ENCODE measurements at regions of chr6 and their contacts with region 1.

Region 1: DNA sequence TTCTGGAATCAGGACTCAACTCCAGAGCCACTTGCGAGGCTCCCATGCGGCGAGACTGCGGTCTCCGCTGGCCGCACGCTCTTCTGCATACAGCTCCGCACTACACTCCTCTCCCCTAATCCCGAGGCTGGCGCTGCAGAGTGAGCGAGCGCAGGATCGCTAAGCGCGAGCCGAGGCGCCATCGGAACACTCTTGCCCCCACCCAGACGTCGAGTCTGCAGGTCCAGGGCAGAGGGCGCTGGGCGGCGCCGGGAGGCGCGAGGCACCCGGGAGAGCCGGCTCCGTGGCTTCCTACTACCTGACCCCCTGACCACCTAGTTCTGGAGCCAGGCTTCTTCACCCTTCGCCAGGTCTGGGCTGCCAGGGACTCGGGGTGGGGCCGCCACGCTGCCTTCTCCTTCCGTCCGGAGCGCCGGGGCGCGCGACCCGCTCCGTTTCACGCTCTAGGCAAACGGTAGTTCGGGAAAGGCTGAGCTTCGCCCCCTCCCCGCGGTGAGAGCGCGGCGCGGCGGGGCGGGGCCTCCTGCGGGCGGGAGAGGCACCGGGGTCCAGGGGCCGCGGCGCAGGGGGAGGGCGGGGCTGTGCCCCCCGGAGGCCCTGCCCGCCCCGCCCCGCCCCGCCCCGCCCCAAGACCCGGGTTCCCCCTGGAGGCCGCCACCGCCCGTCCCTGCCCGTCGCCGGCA is 5.4 kb upstream of the TUBB2A start:
- DNase-seq: peak; percentile 12 to 84 (median 63)
- ATAC-seq: peak; percentile 47
- H3K4me3 ChIP-seq: peak overlapping the region; percentile 71 to 79
- H3K4me3 Mint-ChIP-seq: peak overlapping the region; percentile 84
- H3K27ac ChIP-seq: peak overlapping the region in 1 of 2 experiments; percentile 72
- H3K27ac Mint-ChIP-seq: peak overlapping the region; percentile 86
- H3K4me1 ChIP-seq: peaks cover 33% of the 10 kb centered on the region
- H3K4me1 Mint-ChIP-seq: peaks cover 37% of the 10 kb centered on the region
- H3K27me3 ChIP-seq: no peaks in the 10 kb centered on the region
- H3K27me3 Mint-ChIP-seq: no peaks in the 10 kb centered on the region
- CTCF ChIP-seq: no peak

Region 2: GRCh38 chr6:3125815-3126214 is 36.9 kb before region 1 on chr6:
- CTCF ChIA-PET with region 1: interaction called, 3 read pairs
- POLR2A ChIA-PET with region 1: interaction called, 3 read pairs
- intact Hi-C with region 1: loop called (anchors 2 kb)
- DNase-seq: no peak
- ATAC-seq: no peak
- H3K4me3 ChIP-seq: no peak overlapping the region
- H3K4me3 Mint-ChIP-seq: no peak overlapping the region
- H3K27ac ChIP-seq: no peak overlapping the region
- H3K27ac Mint-ChIP-seq: no peak overlapping the region
- H3K4me1 ChIP-seq: no peaks in the 10 kb centered on the region
- H3K4me1 Mint-ChIP-seq: peaks cover 4% of the 10 kb centered on the region
- H3K27me3 ChIP-seq: no peaks in the 10 kb centered on the region
- H3K27me3 Mint-ChIP-seq: no peaks in the 10 kb centered on the region
- CTCF ChIP-seq: no peak

Region 3: GRCh38 chr6:3226848-3227362 is 64.2 kb after region 1 on chr6:
- CTCF ChIA-PET with region 1: no interaction called
- POLR2A ChIA-PET with region 1: interaction called, 3 read pairs
- intact Hi-C with region 1: loop called (anchors 2 to 10 kb)
- DNase-seq: peak in 4 of 9 experiments; percentile 32 to 58 (median 42)
- ATAC-seq: peak; percentile 23
- H3K4me3 ChIP-seq: peak overlapping the region; percentile 12 to 20
- H3K4me3 Mint-ChIP-seq: peak overlapping the region; percentile 73
- H3K27ac ChIP-seq: no peak overlapping the region
- H3K27ac Mint-ChIP-seq: no peak overlapping the region
- H3K4me1 ChIP-seq: peaks cover 52% of the 10 kb centered on the region
- H3K4me1 Mint-ChIP-seq: peaks cover 43% of the 10 kb centered on the region
- H3K27me3 ChIP-seq: peaks cover 53 to 56% of the 10 kb centered on the region in 2 experiments
- H3K27me3 Mint-ChIP-seq: peaks cover 52% of the 10 kb centered on the region
- CTCF ChIP-seq: no peak

Region 4: DNA sequence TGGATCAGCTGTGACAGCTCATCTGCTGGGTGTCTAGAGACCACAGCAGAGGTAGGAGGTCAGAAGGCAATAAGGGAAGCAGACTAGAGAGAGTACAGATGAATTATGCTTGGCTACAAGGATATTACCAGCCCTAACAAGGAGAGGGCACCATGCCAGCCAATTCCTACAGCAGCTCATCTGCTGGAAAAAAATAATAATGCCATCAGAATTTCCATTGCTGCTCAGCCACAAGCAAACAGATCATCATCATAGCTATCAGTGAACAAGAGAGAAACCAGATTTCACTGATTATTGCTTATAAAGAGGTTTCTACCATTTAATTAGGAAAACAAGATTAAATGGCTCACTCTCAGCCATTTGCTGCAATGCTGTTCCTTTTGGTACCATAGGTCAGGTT is 162.5 kb after region 1 on chr6:
- CTCF ChIA-PET with region 1: no interaction called
- POLR2A ChIA-PET with region 1: no interaction called
- intact Hi-C with region 1: no loop called
- DNase-seq: no peak
- ATAC-seq: no peak
- H3K4me3 ChIP-seq: no peak overlapping the region
- H3K4me3 Mint-ChIP-seq: no peak overlapping the region
- H3K27ac ChIP-seq: no peak overlapping the region
- H3K27ac Mint-ChIP-seq: no peak overlapping the region
- H3K4me1 ChIP-seq: no peaks in the 10 kb centered on the region
- H3K4me1 Mint-ChIP-seq: no peaks in the 10 kb centered on the region
- H3K27me3 ChIP-seq: peaks cover 0 to 4% of the 10 kb centered on the region in 2 experiments
- H3K27me3 Mint-ChIP-seq: no peaks in the 10 kb centered on the region
- CTCF ChIP-seq: no peak

Region 5: DNA sequence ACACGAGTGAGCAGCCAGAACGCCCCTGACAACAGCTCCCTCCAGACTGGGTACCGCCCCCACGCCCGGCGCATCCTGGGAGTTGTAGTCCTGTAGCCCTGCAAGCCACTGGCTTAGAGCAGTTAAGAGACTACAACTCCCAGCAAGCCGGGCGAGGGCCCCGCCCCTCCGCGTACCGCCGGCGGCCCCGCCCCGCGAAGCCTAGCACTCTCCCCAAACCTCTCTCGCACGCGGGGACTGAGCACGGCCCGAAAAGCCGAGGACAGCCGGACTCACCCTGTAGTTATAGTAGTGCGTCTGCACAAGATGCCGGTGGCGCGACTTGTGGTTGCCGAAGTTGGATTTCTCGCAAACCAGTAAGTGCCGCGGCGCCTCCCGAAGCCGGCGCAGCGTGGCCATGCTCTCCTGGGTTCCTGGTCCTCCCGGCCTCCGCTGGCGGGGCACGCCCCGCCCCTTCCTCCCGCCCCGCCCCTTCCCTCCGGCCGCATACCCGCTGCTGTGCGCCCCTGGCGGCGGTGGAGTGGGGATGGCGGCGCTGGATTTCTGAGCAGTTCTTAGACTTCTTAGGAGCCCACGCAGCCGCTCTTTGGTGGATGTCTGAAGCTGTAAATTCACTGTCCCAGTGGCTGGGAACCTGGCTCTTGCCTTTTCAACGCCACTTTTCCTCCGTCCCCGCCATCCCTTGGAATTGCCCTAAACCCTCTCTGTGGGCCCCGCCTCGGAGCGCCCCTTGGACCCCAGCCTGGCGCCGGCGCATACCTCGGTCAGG is 1841.1 kb after region 1 on chr6 and contains the start of gene RPP40:
- CTCF ChIA-PET with region 1: no interaction called
- POLR2A ChIA-PET with region 1: no interaction called
- intact Hi-C with region 1: loop called in 1 of 2 experiments (anchors 5 kb)
- DNase-seq: peak; percentile 97 to 99 (median 98)
- ATAC-seq: peak; percentile 94
- H3K4me3 ChIP-seq: peak within 1 kb of the TSS; percentile 80 to 95
- H3K4me3 Mint-ChIP-seq: peak within 1 kb of the TSS; percentile 94
- H3K27ac ChIP-seq: peak within 1 kb of the TSS; percentile 79 to 82
- H3K27ac Mint-ChIP-seq: peak within 1 kb of the TSS; percentile 97
- H3K4me1 ChIP-seq: peaks cover 8% of the 10 kb centered on the region
- H3K4me1 Mint-ChIP-seq: peaks cover 13% of the 10 kb centered on the region
- H3K27me3 ChIP-seq: no peaks in the 10 kb centered on the region
- H3K27me3 Mint-ChIP-seq: no peaks in the 10 kb centered on the region
- CTCF ChIP-seq: peak; percentile 84
- total RNA-seq, gene RPP40: 0.94 to 1.2 TPM